GM13976 (cell line): ENCODE measurements at regions of chr5 and their contacts with region 1.

Region 1: GRCh38 chr5:64634997-64635686 is 55.2 kb upstream of the SHISAL2B start:
- DNase-seq: peak; percentile 15
- CTCF ChIP-seq: peak; percentile 44

Region 2: DNA sequence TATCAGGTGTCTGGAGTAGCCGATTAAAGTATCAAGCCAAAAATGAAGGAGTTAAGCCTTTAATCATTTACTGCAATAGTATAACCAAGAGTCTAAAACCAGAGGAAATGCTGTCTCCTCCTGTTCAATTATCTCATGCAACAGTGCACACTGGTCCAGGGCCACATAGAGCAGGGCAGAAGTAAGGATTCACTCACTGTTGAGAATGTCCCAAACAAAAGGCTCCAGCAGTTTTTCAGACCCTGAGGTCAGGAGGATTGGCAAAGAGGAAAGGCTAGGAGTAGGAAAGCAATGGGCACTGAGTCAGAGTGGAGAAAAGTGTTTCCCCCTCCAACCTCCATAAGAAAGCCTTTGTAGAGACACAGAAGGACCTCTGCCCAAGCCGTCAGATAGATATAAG is 301.3 kb before region 1 on chr5:
- in situ Hi-C with region 1: no loop called
- DNase-seq: no peak
- CTCF ChIP-seq: no peak

Region 3: DNA sequence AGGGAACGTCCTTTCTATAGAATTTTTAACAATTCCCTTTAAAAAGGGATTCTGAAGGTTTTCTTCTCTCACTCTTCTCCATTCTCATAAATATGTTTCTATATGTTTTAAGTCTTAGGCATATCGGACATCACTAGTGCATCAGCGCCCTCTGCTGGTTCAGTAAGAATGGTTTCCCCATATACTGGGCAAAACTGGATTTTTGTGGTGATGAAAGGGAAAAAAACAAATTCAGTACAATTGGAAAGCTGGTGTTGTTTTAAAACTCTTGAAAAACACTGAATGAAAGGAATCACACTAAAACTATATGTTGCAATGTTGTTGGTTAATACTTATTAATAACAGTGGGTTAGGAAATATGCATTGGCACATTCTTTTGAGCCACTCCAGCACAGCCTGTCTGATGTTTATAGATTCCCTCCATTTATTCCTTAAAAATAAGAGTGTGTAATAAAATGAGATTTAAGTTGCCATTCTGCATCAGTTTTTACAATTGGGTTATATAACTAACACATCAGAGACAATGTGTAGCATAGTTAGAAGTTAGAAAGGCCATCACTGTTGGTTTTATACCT is 149.4 kb after region 1 on chr5:
- in situ Hi-C with region 1: loop called (anchors 10 kb)
- DNase-seq: no peak
- CTCF ChIP-seq: peak; percentile 75

Region 4: GRCh38 chr5:64914396-64914795 is 279.3 kb after region 1 on chr5:
- in situ Hi-C with region 1: no loop called
- DNase-seq: no peak
- CTCF ChIP-seq: no peak

Region 5: DNA sequence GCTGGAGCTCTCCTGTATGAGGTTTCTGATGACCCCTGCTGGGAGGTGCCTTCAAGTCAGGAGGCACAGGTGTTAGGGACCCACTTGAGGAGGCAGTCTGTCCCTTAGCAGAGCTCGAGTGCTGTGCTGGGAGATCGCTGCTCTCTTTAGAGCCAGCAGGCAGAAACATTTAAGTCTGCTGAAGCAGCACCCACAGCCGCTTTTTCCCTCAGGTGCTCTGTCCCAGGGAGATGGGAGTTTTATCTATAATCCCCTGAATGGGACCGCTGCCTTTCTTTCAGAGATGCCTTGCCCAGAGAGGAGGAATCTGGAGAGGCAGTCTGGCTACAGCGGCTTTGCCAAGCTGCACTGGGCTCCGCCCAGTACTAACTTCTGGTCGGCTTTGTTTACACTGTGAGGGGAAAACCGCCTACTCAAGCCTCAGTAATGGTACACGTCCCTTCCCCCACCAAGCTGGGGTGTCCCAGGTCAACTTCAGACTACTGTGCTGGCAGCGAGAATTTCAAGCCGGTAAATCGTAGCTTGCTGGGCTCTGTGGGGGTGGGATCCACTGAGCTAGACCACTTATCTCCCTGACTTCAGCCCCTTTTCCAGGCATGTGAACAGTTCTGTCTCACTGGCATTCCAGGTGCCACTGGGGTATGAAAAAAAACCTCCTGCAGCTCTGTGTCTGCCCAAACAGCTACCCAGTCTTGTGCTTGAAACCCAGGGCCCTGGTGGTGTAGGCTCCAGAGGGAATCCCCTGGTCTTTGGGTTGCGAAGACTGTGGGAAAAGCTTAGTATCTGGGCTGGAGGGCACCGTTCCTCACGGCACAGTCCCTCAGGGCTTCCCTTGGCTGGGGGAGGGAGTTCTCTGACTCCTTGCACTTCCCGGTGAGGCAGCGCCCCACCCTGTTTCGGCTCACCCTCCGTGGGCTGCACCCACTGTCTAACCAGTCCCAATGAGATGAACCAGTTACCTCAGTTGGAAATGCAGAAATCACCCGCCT is 304.7 kb after region 1 on chr5:
- in situ Hi-C with region 1: loop called (anchors 25 kb)
- DNase-seq: no peak
- CTCF ChIP-seq: no peak